Dendritic cell treated with granulocyte-macrophage colony-stimulating factor and Interleukin-4, amounts not matched to agents 40 ng/mL and 50 ng/mL, for 4 days (primary cell): ENCODE measurements at regions of chr1 and their contacts with region 1.

Region 1: GRCh38 chr1:212542761-212543187 is 65.8 kb upstream of the ATF3 start:
- H3K4me3 Mint-ChIP-seq: no peak overlapping the region
- H3K27ac Mint-ChIP-seq: peak overlapping the region; percentile 67
- H3K4me1 Mint-ChIP-seq: peaks cover 27% of the 10 kb centered on the region
- H3K27me3 Mint-ChIP-seq: no peaks in the 10 kb centered on the region

Region 2: DNA sequence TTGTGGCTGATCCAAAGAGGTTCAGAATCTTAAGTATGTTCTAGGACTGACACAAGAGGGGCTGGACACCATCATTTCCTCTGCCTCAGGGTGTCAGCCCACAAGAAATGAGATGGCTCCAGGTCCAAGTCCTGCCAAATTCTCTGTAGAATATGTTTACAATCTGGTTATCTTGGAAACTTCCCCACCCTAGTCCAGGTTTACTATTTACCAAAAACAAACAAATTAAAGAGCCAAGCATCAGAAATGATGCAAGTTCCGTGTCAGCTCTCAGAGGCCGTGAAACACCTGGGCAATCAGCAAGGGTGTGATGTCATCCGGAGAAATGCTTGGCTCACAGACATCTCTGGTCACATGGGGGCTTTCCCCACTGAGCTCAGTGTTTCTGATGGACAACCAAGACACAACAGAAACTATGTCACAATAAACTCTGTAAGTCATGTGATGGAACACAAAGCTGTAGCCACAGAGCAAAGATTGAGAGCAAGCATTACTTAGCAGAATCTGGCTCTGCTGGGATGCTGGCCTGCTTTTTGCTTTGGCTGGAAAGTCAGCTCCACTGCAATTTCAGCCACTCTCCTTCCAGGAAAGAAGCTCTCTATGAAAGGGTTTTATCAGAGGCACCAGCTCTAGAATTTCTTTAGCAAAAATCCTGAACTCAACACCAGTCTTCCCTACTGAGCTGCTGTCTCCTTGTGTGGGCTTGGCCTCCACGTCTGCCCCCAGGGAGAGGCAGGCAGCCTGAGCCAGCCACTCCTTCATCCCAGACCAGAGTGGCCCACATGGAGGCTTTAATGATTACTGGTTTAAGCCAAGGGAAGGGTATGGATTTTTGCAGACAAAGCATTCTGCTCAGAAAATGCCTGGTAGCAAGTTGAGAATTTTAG is 54.1 kb before region 1 on chr1:
- intact Hi-C with region 1: loop called (anchors 2 kb)
- H3K4me3 Mint-ChIP-seq: no peak overlapping the region
- H3K27ac Mint-ChIP-seq: peak overlapping the region; percentile 83
- H3K4me1 Mint-ChIP-seq: peaks cover 87% of the 10 kb centered on the region
- H3K27me3 Mint-ChIP-seq: no peaks in the 10 kb centered on the region

Region 3: GRCh38 chr1:212608209-212608955 is 65.6 kb after region 1 on chr1 and contains the start of gene ATF3:
- intact Hi-C with region 1: loop called (anchors 2 kb)
- H3K4me3 Mint-ChIP-seq: peak within 1 kb of the TSS; percentile 91
- H3K27ac Mint-ChIP-seq: peak within 1 kb of the TSS; percentile 96
- H3K4me1 Mint-ChIP-seq: peaks cover 64% of the 10 kb centered on the region
- H3K27me3 Mint-ChIP-seq: peaks cover 60% of the 10 kb centered on the region

Region 4: DNA sequence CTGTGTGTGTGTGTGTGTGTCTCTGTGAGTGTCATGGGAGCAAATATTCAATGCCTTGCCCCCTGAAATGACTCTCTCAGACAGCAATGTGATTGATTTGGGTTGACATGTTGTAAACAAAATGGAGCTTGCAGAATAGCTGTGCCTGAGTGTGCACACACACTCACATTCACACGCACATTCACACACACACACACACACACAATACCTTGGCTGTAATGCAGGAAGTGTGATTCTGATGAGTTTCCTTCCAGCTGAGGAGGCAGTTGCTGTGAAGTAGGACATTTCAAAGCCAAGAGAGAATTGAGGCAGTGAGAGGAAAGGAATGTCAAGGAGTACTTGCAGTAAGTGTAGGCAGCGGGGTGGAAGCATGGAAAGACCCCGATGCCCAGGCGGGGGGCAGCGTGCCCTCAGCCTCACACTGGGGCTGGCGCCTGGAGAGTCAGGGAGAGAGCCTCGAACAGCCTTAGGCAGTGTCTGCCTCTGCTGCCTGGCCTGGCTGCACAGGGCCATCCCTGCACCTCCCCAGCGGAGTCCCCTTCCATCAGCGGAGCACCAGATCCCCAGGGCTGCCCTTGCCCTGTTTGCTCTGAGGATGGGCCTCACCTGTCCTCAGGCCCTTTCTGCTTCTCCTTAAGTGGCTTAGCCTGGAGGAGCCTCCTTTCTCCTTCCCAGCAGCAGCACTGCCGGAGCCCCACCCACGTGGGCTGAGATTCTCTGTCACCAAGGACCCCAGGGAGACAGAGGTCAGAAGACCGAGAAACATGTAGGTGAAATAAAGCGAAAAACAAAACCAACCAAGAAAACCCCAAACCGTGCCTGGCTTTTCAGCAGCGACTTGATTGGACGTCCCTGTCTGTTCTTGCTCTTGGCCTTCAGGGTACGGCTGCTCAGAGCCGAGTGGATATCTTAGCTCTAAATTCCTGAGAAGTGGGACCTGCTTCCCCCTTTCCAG is 416.8 kb after region 1 on chr1:
- intact Hi-C with region 1: no loop called
- H3K4me3 Mint-ChIP-seq: no peak overlapping the region
- H3K27ac Mint-ChIP-seq: no peak overlapping the region
- H3K4me1 Mint-ChIP-seq: peaks cover 10% of the 10 kb centered on the region
- H3K27me3 Mint-ChIP-seq: peaks cover 33% of the 10 kb centered on the region